Dendritic cell treated with granulocyte-macrophage colony-stimulating factor and Interleukin-4, amounts not matched to agents 40 ng/mL and 50 ng/mL, for 4 days (primary cell): ENCODE measurements at regions of chr1 and their contacts with region 1.

Region 1: DNA sequence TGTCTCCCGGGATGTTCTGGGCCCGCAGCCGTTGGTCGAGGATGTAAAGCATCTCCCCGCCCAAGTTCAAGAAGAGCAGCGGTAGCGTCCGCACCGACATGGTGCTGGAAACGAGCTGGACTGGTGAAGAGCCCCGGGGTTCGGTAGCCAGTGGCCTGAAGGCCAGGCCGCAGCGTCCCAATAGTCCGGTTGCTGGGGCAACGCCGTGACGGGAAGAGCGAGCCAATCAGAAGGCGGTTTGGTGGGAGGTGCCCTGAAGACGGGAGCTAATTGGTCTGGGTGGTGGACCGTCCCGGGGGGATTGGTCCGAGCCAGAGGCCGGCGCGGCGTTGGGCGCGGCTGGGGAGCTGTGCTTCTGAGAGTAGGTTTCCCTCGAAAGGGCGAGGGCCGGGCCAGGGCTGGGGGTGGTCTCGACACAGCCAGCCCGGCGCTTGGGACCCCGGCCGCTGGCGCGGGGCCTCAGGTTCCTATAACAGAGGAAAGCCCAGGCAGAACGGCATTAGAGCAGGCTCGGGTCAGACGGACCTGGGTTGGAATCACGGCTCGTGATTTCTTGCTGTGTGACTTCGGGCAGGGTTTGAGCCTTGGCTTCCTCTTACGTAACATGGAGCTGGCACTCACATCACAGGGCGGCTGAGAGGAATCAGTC is at the start of gene OSCP1:
- H3K4me3 Mint-ChIP-seq: peak within 1 kb of the TSS; percentile 69
- H3K27ac Mint-ChIP-seq: peak within 1 kb of the TSS; percentile 89
- H3K4me1 Mint-ChIP-seq: peaks cover 42% of the 10 kb centered on the region
- H3K27me3 Mint-ChIP-seq: no peaks in the 10 kb centered on the region

Region 2: DNA sequence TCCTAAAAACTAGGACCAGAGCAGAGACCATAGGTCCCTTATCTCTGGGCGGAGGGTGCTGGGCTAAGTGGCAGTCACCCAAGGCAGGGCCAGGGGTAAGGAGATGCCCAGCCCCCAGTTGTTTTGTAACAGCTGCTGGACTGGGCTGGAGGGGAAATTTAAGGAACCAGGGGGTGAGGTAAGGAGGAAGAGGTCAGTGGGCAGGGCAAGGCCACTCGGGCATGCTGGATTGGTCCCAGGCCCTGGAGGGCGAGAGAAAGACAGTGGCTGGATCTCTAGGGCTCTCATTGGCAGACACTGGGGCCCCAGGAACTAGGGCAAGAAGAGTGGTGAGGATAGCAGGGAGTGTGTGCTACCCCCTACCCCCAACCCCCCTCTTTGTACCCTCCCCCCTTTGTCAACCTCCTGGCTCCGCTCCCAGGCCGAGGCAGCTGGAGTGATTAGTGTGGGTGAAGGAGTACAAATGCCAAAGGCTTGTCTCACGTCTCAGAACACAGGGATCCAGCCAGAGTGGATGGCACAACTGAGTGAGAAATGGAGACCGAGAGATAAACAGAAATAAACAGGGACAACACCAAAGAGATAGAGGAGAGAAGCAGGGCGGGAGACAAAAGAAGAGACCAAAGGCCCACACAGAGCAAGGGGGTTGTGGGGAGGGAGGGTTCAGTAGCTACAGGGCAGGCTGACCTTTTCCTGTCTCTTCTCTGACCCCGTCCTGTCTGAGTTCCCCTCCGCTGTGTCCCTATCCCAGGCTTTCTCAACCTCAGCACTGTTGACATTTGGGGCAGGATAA is 246.6 kb before region 1 on chr1:
- intact Hi-C with region 1: no loop called
- H3K4me3 Mint-ChIP-seq: no peak overlapping the region
- H3K27ac Mint-ChIP-seq: peak overlapping the region; percentile 89
- H3K4me1 Mint-ChIP-seq: peaks cover 17% of the 10 kb centered on the region
- H3K27me3 Mint-ChIP-seq: no peaks in the 10 kb centered on the region

Region 3: GRCh38 chr1:36463803-36464604 is 13.6 kb after region 1 on chr1 and contains the start of gene MRPS15:
- intact Hi-C with region 1: loop called (anchors 2 kb)
- H3K4me3 Mint-ChIP-seq: peak within 1 kb of the TSS; percentile 98
- H3K27ac Mint-ChIP-seq: peak within 1 kb of the TSS; percentile 96
- H3K4me1 Mint-ChIP-seq: peaks cover 64% of the 10 kb centered on the region
- H3K27me3 Mint-ChIP-seq: no peaks in the 10 kb centered on the region

Region 4: DNA sequence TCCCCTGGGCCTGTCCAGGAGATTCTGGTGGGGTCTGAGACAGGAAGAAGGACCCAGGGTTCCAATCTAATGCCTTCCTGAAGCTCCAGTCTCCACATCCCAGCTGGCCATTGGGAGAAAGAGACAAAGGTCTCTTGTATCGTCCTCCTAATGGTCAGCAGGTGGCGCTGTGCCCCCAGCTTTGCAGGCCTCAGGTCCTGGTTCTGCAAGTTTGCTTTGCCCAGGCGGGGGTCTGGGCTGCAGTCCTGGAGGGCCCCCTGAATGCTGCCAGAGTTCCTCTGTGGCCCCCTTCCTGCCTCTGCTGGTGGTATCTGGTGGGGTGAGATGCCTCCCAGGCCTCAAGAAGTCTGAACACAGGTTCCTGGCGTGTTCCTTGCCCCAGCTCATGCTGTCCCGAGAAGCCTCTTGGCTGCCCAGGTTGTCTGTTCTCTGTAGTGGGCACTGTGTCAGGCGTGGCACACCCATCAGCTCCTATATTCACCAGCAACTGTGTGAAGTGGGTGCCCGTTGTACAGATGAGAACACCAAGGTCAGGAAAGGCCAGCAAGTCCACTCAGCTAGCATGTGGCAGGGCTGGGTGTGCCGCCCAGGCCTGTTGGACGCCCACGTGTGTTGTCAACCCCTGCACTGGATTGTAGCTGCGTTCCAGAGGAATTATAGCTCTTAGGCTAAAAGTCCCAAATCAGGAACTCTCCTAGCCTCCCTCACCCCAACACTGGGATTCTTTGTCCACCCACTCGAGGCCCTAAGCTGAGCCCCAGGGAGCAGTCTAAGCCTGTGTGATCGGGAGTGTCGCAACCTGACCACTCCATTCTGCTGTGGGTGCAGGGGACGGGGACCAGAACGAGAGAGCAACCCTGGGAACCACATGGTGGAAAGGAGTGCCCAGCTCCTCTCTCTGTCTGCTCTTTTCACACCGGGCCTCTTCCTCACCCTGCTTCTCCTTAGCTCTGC is 66.3 kb after region 1 on chr1:
- intact Hi-C with region 1: loop called (anchors 5 kb)
- H3K4me3 Mint-ChIP-seq: no peak overlapping the region
- H3K27ac Mint-ChIP-seq: peak overlapping the region; percentile 26
- H3K4me1 Mint-ChIP-seq: peaks cover 45% of the 10 kb centered on the region
- H3K27me3 Mint-ChIP-seq: no peaks in the 10 kb centered on the region

Region 5: GRCh38 chr1:36650200-36651065 is 200.0 kb after region 1 on chr1:
- intact Hi-C with region 1: no loop called
- H3K4me3 Mint-ChIP-seq: no peak overlapping the region
- H3K27ac Mint-ChIP-seq: no peak overlapping the region
- H3K4me1 Mint-ChIP-seq: peaks cover 21% of the 10 kb centered on the region
- H3K27me3 Mint-ChIP-seq: peaks cover 43% of the 10 kb centered on the region